ENCODE measurements at regions of chr3 and their contacts with region 1.

Region 1: GRCh38 chr3:50436114-50436674 is 67.2 kb downstream of the CACNA2D2 start:
- DNase-seq: peak; percentile 35 to 67
- ATAC-seq: peak; percentile 83 to 95
- H3K4me3 ChIP-seq: no peak overlapping the region
- H3K27ac ChIP-seq: no peak overlapping the region
- H3K4me1 ChIP-seq: no peaks in the 10 kb centered on the region
- CTCF ChIP-seq: peak; percentile 65
- EP300 ChIP-seq: no peak
- POLR2A ChIP-seq: no peak
- RAD21 ChIP-seq: peak; percentile 52 to 71

Region 2: DNA sequence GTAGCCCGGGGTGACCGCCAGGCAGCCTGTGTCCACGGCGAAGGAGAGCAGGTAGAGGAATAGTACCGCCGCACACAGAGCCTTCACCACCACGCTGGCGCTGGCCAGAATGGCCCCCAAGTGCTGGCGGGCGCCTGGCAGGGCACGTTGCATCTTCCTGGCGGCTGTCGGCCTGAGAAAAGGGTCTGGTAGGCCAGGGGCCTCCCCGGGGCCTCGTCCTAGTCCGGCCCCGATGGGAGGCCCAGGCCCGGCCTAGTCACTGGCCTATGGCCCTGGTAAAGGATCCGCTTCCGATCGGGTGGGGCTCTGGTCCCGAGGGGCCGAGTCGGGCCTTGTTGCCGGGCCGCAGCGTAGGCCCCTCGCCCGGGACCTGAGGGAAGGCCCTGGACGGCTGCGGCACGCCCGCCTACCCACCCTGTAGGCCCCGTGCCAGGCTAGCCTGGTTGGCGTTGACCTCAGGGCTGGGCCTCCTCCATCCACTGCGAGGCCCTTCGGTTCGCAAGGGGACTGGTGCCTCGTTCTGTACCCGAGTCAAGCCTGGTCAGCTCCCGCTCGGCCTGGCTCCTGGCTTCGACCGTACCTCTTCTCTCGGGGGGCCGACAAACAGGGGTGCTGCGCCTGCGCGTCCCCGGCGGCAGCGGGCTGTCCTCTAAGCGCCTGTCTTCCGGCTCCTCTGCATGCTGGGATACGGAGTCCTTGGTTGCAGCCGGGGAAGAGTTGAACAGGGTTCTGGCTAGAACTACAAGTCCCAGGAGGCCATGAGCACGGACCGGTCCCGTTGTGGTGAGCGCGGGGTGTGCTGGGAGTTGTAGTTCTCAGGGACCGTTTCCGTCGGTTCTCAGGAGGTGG is 77.1 kb before region 1 on chr3 and contains the start of gene TMEM115:
- CTCF ChIA-PET with region 1: no interaction called
- POLR2A ChIA-PET with region 1: no interaction called
- DNase-seq: peak; percentile 92 to 96
- ATAC-seq: peak; percentile 99 to 100
- H3K4me3 ChIP-seq: peak within 1 kb of the TSS; percentile 100
- H3K27ac ChIP-seq: peak within 1 kb of the TSS; percentile 94 to 100
- H3K4me1 ChIP-seq: peaks cover 25% of the 10 kb centered on the region
- CTCF ChIP-seq: no peak
- EP300 ChIP-seq: no peak
- POLR2A ChIP-seq: peak; percentile 50; the same call in 1 of the 2 replicates
- RAD21 ChIP-seq: no peak
- polyA plus RNA-seq, gene TMEM115: 17.4 and 18.8 TPM in 2 replicates

Region 3: GRCh38 chr3:50381383-50381782 is 54.8 kb before region 1 on chr3:
- CTCF ChIA-PET with region 1: no interaction called
- POLR2A ChIA-PET with region 1: no interaction called
- DNase-seq: no peak
- ATAC-seq: no peak
- H3K4me3 ChIP-seq: no peak overlapping the region
- H3K27ac ChIP-seq: no peak overlapping the region
- H3K4me1 ChIP-seq: no peaks in the 10 kb centered on the region
- CTCF ChIP-seq: no peak
- EP300 ChIP-seq: no peak
- POLR2A ChIP-seq: no peak
- RAD21 ChIP-seq: no peak

Region 4: GRCh38 chr3:50532058-50532705 is 96.0 kb after region 1 on chr3:
- CTCF ChIA-PET with region 1: interaction called, 11 read pairs
- POLR2A ChIA-PET with region 1: no interaction called
- DNase-seq: no peak
- ATAC-seq: peak in 1 of 2 experiments; percentile 43; a peak in 2 of 6 replicates
- H3K4me3 ChIP-seq: no peak overlapping the region
- H3K27ac ChIP-seq: no peak overlapping the region
- H3K4me1 ChIP-seq: no peaks in the 10 kb centered on the region
- CTCF ChIP-seq: no peak
- EP300 ChIP-seq: no peak
- POLR2A ChIP-seq: no peak
- RAD21 ChIP-seq: no peak